ENCODE measurements at regions of chrX and their contacts with region 1.

Region 1: DNA sequence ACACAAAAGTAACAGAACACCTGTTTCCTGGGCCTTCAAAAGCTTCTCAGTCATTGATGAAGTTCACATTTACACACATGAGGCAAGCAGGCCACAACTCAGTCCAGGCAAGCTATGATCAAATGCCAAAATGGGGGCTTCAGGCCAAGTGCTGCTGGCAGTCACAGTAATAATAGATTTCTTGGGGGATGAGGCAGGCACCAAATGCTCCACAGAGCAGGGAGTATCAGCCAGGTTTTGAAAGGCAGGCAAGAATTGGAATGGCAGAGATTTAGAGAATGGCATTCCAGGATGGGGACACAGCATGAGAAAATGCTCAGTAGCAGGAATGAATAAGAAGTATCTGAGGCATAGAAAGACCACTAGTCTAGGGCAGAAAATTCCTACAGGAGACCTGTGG is 52.8 kb downstream of the GRIA3 start:
- DNase-seq: peak in 1 of 7 donors; percentile 5
- H3K4me3 ChIP-seq: no peak overlapping the region
- H3K27ac ChIP-seq: peak overlapping the region in 2 of 5 donors; percentile 2 to 61
- H3K4me1 ChIP-seq: peaks cover 0 to 6% of the 10 kb centered on the region in 2 donors
- H3K27me3 ChIP-seq: peaks cover 3% of the 10 kb centered on the region
- CTCF ChIP-seq: no peak
- POLR2A ChIP-seq: no peak

Region 2: DNA sequence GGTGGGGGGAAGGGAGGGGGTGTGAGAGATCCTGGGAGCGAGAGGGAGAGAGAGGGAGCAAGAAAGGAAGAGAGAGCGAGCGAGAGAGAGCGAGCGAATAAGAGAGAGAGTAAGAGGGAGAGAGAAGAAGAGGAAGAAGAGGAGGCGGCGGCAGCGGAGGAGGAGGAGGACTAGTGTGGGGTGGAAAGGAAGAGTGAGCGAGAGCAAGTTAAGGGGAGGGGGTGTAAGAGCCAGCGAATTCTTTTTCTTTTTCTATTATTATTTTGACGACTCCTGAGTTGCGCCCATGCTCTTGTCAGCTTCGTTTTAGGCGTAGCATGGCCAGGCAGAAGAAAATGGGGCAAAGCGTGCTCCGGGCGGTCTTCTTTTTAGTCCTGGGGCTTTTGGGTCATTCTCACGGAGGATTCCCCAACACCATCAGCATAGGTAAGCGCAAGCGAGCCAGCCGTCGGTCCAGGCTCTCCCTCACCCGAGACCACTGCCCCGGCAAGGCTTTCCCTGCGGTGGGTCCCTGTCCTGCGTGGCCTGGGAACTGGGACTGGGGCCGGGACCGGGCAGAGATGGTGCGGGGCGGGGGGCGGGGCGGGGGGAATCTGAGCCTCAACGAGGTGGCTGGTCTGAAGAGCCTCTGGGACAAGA is 52.5 kb before region 1 on chrX and contains the start of gene GRIA3:
- intact Hi-C with region 1: loop called in 1 of 2 experiments (anchors 10 kb)
- DNase-seq: peak; percentile 20 to 68 (median 43)
- H3K4me3 ChIP-seq: peak within 1 kb of the TSS in 3 of 4 donors; percentile 18 to 51 (median 19)
- H3K27ac ChIP-seq: peak within 1 kb of the TSS in 2 of 5 donors; percentile 20 to 49
- H3K4me1 ChIP-seq: no peaks in the 10 kb centered on the region
- H3K27me3 ChIP-seq: no peaks in the 10 kb centered on the region
- CTCF ChIP-seq: peak in 1 of 6 experiments; percentile 6
- POLR2A ChIP-seq: no peak
- total RNA-seq, gene GRIA3: 9.1 to 51.9 (median 23.3) TPM

Region 3: DNA sequence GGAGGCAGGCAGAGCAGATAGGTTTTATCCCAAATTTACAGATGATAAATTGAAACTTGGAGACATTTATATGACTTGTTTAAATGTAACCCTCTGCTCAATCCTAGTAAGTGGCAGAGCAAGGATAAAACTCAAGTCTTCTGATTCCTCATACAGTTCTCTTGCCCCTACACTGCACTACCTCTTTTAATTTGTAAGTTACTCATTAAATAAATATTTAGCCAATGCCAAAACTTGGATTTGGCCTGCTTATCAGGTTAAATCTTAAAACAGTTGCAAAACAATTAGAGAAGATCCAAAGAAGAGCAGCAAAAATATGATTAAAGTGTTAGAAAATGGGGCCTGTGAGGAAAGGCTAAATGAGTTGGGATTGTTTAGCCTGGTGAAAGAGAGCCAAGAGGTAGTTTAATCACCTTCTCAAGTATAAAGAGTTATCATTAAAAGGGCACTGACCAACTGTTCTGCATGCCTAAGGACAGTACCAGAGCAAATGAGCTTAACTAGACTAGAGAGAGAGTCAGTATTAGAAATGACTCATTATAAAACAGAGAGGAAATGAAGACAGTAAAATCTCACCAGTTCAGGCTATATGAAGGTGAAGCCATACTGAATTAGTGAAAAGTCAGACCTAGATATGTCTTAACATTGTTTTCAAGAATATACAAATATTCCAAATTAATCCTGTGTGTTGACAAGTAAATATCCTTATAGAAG is 93.5 kb after region 1 on chrX:
- intact Hi-C with region 1: no loop called
- DNase-seq: no peak
- H3K4me3 ChIP-seq: no peak overlapping the region
- H3K27ac ChIP-seq: no peak overlapping the region
- H3K4me1 ChIP-seq: no peaks in the 10 kb centered on the region
- H3K27me3 ChIP-seq: no peaks in the 10 kb centered on the region
- CTCF ChIP-seq: no peak
- POLR2A ChIP-seq: no peak

Region 4: GRCh38 chrX:123629502-123629901 is 392.6 kb after region 1 on chrX:
- intact Hi-C with region 1: no loop called
- DNase-seq: no peak
- H3K4me3 ChIP-seq: no peak overlapping the region
- H3K27ac ChIP-seq: no peak overlapping the region
- H3K4me1 ChIP-seq: no peaks in the 10 kb centered on the region
- H3K27me3 ChIP-seq: no peaks in the 10 kb centered on the region
- CTCF ChIP-seq: no peak
- POLR2A ChIP-seq: no peak

Measured in adrenal gland (tissue), 19 donors.